Endothelial cell of umbilical vein (primary cell): ENCODE measurements at regions of chr16 and their contacts with region 1.

Region 1: GRCh38 chr16:67470359-67470758 is 10.6 kb downstream of the ATP6V0D1 start:
- DNase-seq: no peak
- H3K4me3 ChIP-seq: no peak overlapping the region
- H3K27ac ChIP-seq: no peak overlapping the region
- H3K4me1 ChIP-seq: peaks cover 4% of the 10 kb centered on the region
- H3K27me3 ChIP-seq: no peaks in the 10 kb centered on the region
- CTCF ChIP-seq: no peak
- POLR2A ChIP-seq: no peak

Region 2: DNA sequence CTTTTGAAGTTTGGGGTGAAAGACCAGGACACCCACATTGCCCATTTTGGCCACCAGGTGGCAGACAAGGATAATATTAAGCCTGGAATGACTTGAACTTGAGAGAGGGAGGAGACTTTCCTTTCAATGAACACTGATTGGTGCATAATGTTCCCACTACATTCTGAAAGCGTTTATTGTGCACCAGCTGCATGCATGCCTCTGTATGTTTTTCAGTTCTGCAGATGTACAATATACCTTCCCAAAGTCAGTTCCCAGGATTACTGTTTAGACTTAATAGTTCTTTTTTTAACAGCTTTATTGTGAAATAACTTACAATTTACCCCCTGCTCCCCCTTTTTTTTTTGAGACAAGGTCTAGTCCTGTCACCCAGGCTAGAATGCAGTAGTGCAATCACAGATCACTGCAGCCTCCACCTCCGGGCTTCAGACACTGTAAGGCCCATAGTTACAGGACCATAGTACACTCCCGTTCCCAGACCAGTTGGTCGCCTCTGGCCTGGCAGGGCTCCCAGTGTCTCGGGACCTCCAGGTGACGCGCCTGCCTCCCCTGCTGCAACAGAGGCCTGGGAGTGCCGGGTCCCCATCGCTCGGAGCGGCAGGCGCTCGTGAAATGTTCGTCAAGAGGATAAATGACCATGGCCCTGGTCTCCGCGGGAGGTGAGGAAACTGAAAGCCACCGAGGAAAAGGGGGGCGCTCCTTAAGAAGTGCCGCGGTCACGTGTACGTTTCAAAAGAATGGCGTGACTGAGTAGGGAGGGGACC is 522.9 kb before region 1 on chr16:
- CTCF ChIA-PET with region 1: no interaction called
- POLR2A ChIA-PET with region 1: no interaction called
- dilution Hi-C with region 1: no loop called
- intact Hi-C with region 1: loop called (anchors 1 kb)
- DNase-seq: peak; percentile 90
- H3K4me3 ChIP-seq: peak overlapping the region; percentile 18 to 45 (median 33)
- H3K27ac ChIP-seq: no peak overlapping the region
- H3K4me1 ChIP-seq: peaks cover 12% of the 10 kb centered on the region
- H3K27me3 ChIP-seq: peaks cover 4 to 10% of the 10 kb centered on the region in 2 experiments
- CTCF ChIP-seq: peak; percentile 80 to 95
- POLR2A ChIP-seq: no peak

Region 3: DNA sequence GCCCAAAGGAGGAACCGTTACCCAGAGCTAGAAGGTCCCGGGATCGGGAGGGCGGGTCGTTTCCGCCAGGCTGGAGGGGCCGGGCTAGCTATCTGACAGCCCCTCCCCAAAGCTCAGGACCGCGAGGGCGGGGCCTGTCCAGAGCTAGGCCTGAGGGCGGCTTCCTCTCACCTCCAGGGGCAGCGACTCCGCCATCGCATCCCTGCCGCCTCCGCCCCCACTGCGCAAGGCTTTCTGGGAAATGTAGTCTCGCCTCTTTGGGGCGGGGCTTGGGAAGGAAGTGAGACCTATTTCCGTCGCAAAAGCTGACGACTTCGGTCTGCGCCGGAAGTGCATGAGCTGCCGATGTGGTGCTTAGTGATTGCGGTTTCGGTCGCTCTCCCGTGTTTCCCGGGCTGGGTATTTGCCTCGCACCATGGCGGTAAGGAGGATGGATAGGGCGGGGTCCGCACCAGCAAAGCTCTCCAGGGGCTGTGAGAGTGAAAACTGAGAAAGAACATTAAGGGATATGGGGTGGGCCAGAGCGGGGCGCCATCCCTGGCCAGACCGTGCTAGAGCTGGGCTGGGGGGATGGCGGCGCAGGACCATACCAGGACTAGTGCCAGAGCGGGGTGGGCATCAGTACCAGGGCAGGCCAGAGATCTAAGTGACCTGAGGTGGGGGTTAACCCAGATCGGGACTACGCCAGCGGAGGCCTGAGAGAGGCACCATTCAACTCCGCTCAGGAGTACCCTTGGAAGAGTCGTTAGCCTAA is 243.4 kb before region 1 on chr16 and contains the start of gene TMEM208:
- CTCF ChIA-PET with region 1: no interaction called
- POLR2A ChIA-PET with region 1: no interaction called
- dilution Hi-C with region 1: no loop called
- intact Hi-C with region 1: no loop called
- DNase-seq: peak; percentile 98
- H3K4me3 ChIP-seq: peak within 1 kb of the TSS; percentile 66 to 86 (median 78)
- H3K27ac ChIP-seq: peak within 1 kb of the TSS; percentile 44
- H3K4me1 ChIP-seq: peaks cover 18% of the 10 kb centered on the region
- H3K27me3 ChIP-seq: no peaks in the 10 kb centered on the region
- CTCF ChIP-seq: peak in 1 of 2 donors; percentile 21
- POLR2A ChIP-seq: peak; percentile 81
- total RNA-seq, gene TMEM208: 35.3 and 36.3 TPM in 2 replicates

Region 4: GRCh38 chr16:67349172-67349571 is 121.2 kb before region 1 on chr16:
- CTCF ChIA-PET with region 1: interaction called, 4 read pairs
- POLR2A ChIA-PET with region 1: no interaction called
- dilution Hi-C with region 1: no loop called
- intact Hi-C with region 1: loop called (anchors 5 kb)
- DNase-seq: peak; percentile 59
- H3K4me3 ChIP-seq: no peak overlapping the region
- H3K27ac ChIP-seq: no peak overlapping the region
- H3K4me1 ChIP-seq: peaks cover 23% of the 10 kb centered on the region
- H3K27me3 ChIP-seq: no peaks in the 10 kb centered on the region
- CTCF ChIP-seq: peak; percentile 32 to 49
- POLR2A ChIP-seq: no peak

Region 5: GRCh38 chr16:67660564-67661028 is 190.2 kb after region 1 on chr16 and contains the start of gene PARD6A:
- CTCF ChIA-PET with region 1: no interaction called
- POLR2A ChIA-PET with region 1: no interaction called
- dilution Hi-C with region 1: no loop called
- intact Hi-C with region 1: no loop called
- DNase-seq: peak; percentile 94
- H3K4me3 ChIP-seq: peak within 1 kb of the TSS; percentile 32 to 70 (median 64)
- H3K27ac ChIP-seq: peak within 1 kb of the TSS; percentile 44
- H3K4me1 ChIP-seq: peaks cover 9% of the 10 kb centered on the region
- H3K27me3 ChIP-seq: no peaks in the 10 kb centered on the region
- CTCF ChIP-seq: no peak
- POLR2A ChIP-seq: no peak
- total RNA-seq, gene PARD6A: 1.3 and 1.7 TPM in 2 replicates